SK-N-SH (cell line): ENCODE measurements at regions of chr1 and their contacts with region 1.

Region 1: DNA sequence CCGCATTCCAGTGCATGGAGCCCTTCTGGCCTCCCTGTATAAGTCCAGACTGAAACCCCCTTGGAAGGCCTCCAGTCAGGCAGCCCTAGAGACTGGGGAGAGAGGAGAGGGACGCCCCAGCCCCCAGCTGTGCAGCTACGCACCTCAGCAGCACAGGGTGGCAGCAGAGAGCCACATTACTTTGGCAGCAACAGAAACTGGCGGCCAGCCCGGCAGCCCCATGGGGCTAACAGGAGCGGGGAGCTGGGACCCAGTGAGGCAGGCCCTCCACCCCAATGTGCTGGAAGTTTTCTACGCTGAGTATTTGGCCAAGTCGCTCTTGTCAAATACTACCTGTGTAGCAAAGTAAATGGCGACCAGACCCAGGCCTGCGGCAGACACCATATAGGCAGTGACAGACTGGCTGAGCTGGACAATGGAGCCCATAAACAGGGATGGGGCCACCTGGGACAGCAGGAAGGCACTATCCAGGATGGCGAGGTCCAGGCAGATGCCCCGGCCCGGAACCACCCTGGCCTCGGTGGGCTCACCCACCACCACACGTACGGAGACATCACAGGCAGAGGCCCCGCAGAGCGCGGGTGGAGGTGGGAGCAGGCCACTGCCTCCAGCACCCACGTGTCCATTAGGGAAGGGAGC is 21.2 kb downstream of the SLC45A3 start:
- DNase-seq: peak; percentile 93
- H3K4me3 ChIP-seq: no peak overlapping the region; a peak in 1 of 4 replicates
- H3K27ac ChIP-seq: no peak overlapping the region
- H3K4me1 ChIP-seq: peaks cover 0 to 4% of the 10 kb centered on the region in 2 experiments; a peak in 1 of 4 replicates
- H3K27me3 ChIP-seq: no peaks in the 10 kb centered on the region
- CTCF ChIP-seq: peak; percentile 88
- EP300 ChIP-seq: no peak
- RAD21 ChIP-seq: peak; percentile 91

Region 2: DNA sequence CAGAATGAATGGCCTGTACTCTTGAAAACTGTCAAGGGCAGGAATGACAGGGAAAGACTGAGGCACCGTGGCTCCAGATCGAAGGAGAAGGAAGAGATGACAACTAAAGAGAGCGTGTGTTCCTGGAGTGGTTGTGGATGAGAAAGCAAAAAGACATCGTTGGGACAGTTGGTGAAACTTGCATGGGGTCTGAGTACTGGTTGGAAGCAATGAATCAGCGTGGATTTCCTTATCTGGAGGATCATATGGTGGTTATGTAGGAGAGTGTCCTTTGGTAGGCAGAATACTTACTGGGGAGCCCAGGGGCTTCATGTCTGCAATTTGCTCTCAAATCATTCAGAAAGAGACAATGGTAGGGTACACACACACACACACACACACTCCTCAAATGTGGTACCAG is 251.1 kb before region 1 on chr1:
- CTCF ChIA-PET with region 1: no interaction called
- POLR2A ChIA-PET with region 1: no interaction called
- DNase-seq: no peak
- H3K4me3 ChIP-seq: no peak overlapping the region
- H3K27ac ChIP-seq: no peak overlapping the region
- H3K4me1 ChIP-seq: no peaks in the 10 kb centered on the region
- H3K27me3 ChIP-seq: peaks cover 7% of the 10 kb centered on the region; the same call in 1 of the 2 replicates
- CTCF ChIP-seq: no peak
- EP300 ChIP-seq: no peak
- RAD21 ChIP-seq: no peak

Region 3: DNA sequence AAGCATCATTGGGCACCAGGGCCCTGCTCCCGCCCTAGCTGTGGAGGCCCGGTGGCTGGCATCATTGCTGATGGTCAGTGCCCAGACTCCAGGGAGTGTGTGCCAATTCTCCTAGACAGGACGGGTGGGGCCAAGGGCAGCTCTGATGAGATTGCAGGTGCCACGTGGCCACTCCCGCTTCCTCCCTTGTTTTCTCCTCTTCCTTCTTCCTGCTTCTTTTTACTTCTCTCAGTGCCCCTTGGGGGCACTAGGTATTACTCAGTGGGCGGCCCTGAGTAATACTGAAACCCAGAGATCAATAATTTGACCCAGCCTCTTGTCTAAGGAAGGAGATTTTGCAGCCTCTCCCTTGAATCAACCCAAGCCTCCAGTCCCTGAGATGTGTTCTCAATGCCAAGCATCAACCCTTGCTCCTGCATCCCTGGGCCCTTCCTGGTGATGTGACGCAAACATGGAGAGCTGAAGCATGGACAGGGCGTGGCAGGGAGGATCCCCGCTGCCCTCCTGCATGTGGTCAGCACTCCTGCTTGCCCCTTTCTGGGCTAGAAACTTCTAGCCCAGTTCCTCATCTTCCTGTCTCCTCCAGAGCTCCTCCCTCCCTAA is 122.2 kb before region 1 on chr1:
- CTCF ChIA-PET with region 1: interaction called, 313 read pairs
- POLR2A ChIA-PET with region 1: no interaction called
- DNase-seq: no peak
- H3K4me3 ChIP-seq: no peak overlapping the region
- H3K27ac ChIP-seq: no peak overlapping the region
- H3K4me1 ChIP-seq: peaks cover 0 to 12% of the 10 kb centered on the region in 2 experiments; a peak in 1 of 4 replicates
- H3K27me3 ChIP-seq: no peaks in the 10 kb centered on the region
- CTCF ChIP-seq: no peak
- EP300 ChIP-seq: no peak
- RAD21 ChIP-seq: no peak

Region 4: GRCh38 chr1:205600085-205600484 is 59.0 kb before region 1 on chr1:
- CTCF ChIA-PET with region 1: interaction called, 443 read pairs
- POLR2A ChIA-PET with region 1: no interaction called
- DNase-seq: no peak
- H3K4me3 ChIP-seq: no peak overlapping the region
- H3K27ac ChIP-seq: peak overlapping the region; percentile 78 to 91; a peak in 3 of 4 replicates
- H3K4me1 ChIP-seq: peaks cover 15 to 27% of the 10 kb centered on the region in 2 experiments
- H3K27me3 ChIP-seq: no peaks in the 10 kb centered on the region
- CTCF ChIP-seq: peak; percentile 35
- EP300 ChIP-seq: peak in 1 of 2 experiments; percentile 20; a peak in 1 of 4 replicates
- RAD21 ChIP-seq: no peak

Region 5: GRCh38 chr1:205693421-205693991 is 34.4 kb after region 1 on chr1:
- CTCF ChIA-PET with region 1: interaction called, 32 read pairs
- POLR2A ChIA-PET with region 1: interaction called, 3 read pairs
- DNase-seq: no peak
- H3K4me3 ChIP-seq: no peak overlapping the region
- H3K27ac ChIP-seq: no peak overlapping the region
- H3K4me1 ChIP-seq: no peaks in the 10 kb centered on the region
- H3K27me3 ChIP-seq: no peaks in the 10 kb centered on the region
- CTCF ChIP-seq: no peak
- EP300 ChIP-seq: no peak
- RAD21 ChIP-seq: no peak

Region 6: DNA sequence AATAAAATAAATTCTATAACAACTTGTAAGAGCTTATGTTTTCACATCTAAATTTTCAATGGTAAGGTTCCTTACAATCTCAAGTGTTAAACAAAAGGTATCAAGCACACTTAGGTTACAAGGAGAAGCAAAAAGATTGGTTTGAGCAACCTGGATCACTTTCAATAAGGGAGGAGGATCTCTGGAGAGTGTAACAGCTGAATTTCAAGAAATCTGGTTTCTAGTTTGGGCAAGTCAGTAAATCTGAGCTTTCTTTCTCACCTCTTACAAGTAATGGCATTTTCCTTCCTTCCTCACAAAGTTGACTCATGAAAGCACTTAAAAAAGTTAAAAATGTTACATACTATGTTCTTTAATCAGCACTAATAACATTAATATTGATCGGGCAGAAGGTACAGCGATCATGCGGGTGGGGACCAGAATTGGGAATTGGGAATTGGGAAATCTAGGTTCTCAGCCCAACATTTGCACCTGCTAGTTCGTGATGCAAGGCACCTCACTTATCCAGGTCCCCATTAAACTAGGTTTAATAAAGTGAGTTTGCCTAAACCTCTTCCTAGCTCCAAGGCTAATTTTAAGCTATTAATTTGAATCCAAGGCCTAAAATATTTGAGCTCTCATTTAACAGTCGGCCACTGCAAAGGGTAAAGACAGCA is 87.8 kb after region 1 on chr1:
- CTCF ChIA-PET with region 1: interaction called, 20 read pairs
- POLR2A ChIA-PET with region 1: no interaction called
- DNase-seq: no peak
- H3K4me3 ChIP-seq: peak overlapping the region; percentile 73 to 91; a peak in 3 of 4 replicates
- H3K27ac ChIP-seq: 0 out of 4 replicates have a peak overlapping the region, but pooled peaks of 1 of the 2 experiments have one; percentile 7
- H3K4me1 ChIP-seq: peaks cover 15 to 28% of the 10 kb centered on the region in 2 experiments; a peak in 3 of 4 replicates
- H3K27me3 ChIP-seq: no peaks in the 10 kb centered on the region
- CTCF ChIP-seq: no peak
- EP300 ChIP-seq: no peak
- RAD21 ChIP-seq: no peak

Region 7: DNA sequence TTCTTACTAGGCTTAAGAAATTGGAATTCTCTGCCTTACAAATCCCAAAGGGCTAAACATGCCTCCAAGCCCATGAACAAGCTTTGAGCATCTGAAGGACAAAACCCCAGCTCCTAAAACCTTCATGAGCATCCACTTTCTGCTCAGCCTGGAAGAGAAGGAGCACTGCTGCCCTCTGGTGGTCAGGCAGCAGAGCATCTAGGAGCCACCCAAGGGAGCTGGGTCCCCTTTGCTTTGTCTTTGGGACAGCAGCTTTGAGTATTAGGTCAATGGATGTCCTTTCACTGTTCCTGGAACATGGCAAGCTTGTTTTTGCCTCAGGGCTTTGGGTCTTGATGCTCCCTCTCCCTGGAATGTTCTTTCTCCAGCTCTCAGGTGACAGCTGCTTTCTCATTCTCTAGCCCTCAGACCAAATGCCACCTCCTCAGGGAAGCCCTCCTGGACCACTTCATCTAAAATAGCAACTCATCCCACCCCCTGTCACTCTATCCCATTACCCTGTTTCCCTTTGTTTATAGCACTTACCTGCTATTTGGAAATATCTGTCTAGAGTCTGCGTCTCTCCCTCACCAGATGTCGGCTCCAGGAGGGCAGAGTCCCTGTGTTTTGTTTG is 318.4 kb after region 1 on chr1:
- CTCF ChIA-PET with region 1: interaction called, 101 read pairs
- POLR2A ChIA-PET with region 1: no interaction called
- DNase-seq: peak; percentile 82
- H3K4me3 ChIP-seq: peak overlapping the region in 1 of 2 experiments; percentile 22; a peak in 1 of 4 replicates
- H3K27ac ChIP-seq: no peak overlapping the region
- H3K4me1 ChIP-seq: peaks cover 0 to 12% of the 10 kb centered on the region in 2 experiments; a peak in 1 of 4 replicates
- H3K27me3 ChIP-seq: no peaks in the 10 kb centered on the region
- CTCF ChIP-seq: peak; percentile 97
- EP300 ChIP-seq: no peak
- RAD21 ChIP-seq: peak; percentile 96